HepG2 (cell line): ENCODE measurements at regions of chr6 and their contacts with region 1.

Region 1: GRCh38 chr6:51531623-51532022 is 555.8 kb downstream of the PKHD1 start:
- DNase-seq: no peak
- ATAC-seq: peak; percentile 70
- H3K4me3 ChIP-seq: no peak overlapping the region
- H3K27ac ChIP-seq: no peak overlapping the region
- H3K4me1 ChIP-seq: no peaks in the 10 kb centered on the region
- H3K27me3 ChIP-seq: no peaks in the 10 kb centered on the region
- CTCF ChIP-seq: peak; percentile 33; the same call in 1 of the 2 replicates
- EP300 ChIP-seq: no peak
- POLR2A ChIP-seq: no peak
- RAD21 ChIP-seq: no peak

Region 2: DNA sequence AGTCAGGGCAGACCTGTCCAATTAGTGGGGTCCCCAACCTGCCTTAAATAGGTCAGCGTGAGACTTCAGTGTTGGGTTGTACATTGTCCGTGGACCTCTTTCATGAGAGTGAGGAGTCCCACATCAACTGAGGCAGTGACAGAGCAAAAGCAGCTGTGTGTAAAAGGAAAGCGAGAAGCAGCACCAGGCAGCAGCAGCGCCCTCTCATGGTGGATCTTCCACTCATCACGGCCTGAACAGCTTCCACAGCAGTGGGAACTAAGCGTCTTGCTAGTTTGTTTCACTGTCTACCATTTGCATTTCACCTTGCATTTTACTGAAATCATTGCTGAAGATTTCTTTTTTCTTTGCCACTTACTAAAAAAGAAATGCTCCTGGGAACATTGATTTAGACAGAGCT is 222.0 kb after region 1 on chr6:
- CTCF ChIA-PET with region 1: no interaction called
- POLR2A ChIA-PET with region 1: no interaction called
- in situ Hi-C with region 1: no loop called
- intact Hi-C with region 1: loop called (anchors 1 kb)
- DNase-seq: peak; percentile 3
- ATAC-seq: peak; percentile 79
- H3K4me3 ChIP-seq: no peak overlapping the region
- H3K27ac ChIP-seq: no peak overlapping the region
- H3K4me1 ChIP-seq: no peaks in the 10 kb centered on the region
- H3K27me3 ChIP-seq: no peaks in the 10 kb centered on the region
- CTCF ChIP-seq: peak; percentile 83
- EP300 ChIP-seq: no peak
- POLR2A ChIP-seq: no peak
- RAD21 ChIP-seq: no peak